Mammary epithelial cell (primary cell): ENCODE measurements at regions of chr2 and their contacts with region 1.

Region 1: GRCh38 chr2:70977605-70978205 is 725 bp upstream of the ANKRD53 start:
- DNase-seq: peak; percentile 83
- H3K4me3 ChIP-seq: peak overlapping the region in 2 of 3 experiments; percentile 47 to 49
- H3K27ac ChIP-seq: peak overlapping the region; percentile 32
- H3K4me1 ChIP-seq: peaks cover 18% of the 10 kb centered on the region
- H3K27me3 ChIP-seq: no peaks in the 10 kb centered on the region
- CTCF ChIP-seq: no peak

Region 2: DNA sequence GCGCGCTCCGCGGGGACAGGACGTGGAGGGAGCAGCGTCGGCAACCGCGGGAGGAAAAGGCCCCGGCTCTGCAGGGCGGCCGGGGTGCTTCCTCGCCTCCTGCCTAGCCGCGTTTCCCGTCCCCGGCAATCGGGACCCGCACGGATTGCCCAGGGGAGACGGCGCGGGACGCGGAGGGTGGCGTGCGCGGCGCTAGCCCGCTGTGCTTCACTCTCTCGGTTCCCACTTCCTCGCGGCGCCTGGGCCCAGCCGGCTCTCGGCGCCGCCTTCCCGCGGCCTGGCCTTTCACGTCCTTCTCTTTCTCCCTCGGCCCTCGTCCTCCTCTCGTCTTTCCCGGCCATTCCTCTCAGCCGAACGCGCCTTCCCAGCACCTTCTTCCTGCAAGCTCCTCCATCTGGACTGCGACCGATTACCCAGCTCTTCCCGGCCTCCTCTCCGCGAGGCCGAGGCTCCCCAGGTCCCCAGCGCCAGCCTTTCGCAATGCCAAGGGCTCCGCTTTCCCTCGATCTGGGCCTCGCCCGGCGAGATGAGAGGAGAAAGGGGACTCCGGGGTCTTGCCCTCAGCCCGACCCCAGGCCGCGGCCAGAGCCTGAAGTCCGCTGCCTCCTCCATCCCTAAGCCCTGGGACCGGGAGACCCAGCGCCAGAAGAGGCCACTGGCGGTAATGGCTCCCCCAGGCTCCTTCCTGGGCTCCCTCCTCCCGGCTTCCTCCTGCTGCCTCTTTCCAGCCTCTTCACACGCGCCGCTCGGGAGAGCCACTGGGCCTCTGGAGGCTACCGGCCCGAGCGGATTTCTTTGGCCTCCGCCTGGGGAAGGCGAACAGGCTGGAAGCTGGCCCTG is 76.3 kb before region 1 on chr2:
- CTCF ChIA-PET with region 1: no interaction called
- dilution Hi-C with region 1: no loop called
- in situ Hi-C with region 1: no loop called
- intact Hi-C with region 1: no loop called
- DNase-seq: no peak
- H3K4me3 ChIP-seq: peak overlapping the region; percentile 3 to 49 (median 44)
- H3K27ac ChIP-seq: no peak overlapping the region
- H3K4me1 ChIP-seq: peaks cover 10% of the 10 kb centered on the region
- H3K27me3 ChIP-seq: peaks cover 41% of the 10 kb centered on the region
- CTCF ChIP-seq: no peak

Region 3: DNA sequence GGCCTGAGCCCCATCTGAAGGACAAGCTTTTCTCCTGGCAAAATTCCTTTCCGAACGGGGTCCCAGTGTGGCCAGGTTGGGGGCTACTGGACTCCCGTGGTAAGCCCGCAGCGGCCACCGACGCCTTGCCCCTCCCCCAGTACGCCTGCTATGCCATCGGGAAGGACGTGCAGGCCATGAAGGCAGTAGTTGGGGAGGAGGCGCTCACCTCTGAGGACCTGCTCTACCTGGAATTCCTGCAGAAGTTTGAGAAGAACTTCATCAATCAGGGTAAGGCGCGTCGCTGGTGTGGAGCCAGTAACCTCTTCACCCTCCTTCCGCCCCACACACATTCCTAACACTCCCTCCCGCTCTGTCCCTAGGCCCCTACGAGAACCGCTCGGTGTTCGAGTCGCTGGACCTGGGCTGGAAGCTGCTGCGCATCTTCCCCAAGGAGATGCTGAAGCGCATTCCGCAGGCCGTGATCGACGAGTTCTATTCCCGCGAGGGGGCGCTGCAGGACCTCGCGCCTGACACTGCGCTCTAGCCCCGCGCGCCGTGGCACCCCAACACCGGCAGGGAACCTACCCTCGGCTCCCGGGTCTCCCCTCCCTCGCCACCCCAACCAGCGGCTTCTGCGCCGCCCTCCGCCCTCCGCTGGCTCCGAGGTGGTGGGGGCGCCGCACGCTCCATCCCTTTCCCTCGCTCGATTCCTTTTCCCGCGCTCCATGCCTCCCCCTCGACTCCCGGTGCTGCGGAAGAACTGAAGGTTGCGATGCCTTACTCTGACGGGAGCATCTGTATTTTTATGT is 12.9 kb before region 1 on chr2:
- CTCF ChIA-PET with region 1: interaction called, 4 read pairs
- dilution Hi-C with region 1: no loop called
- in situ Hi-C with region 1: no loop called
- intact Hi-C with region 1: loop called (anchors 1 kb)
- DNase-seq: peak; percentile 52
- H3K4me3 ChIP-seq: peak overlapping the region; percentile 40 to 47 (median 43)
- H3K27ac ChIP-seq: no peak overlapping the region
- H3K4me1 ChIP-seq: peaks cover 3% of the 10 kb centered on the region
- H3K27me3 ChIP-seq: no peaks in the 10 kb centered on the region
- CTCF ChIP-seq: peak; percentile 52 to 87

Region 4: DNA sequence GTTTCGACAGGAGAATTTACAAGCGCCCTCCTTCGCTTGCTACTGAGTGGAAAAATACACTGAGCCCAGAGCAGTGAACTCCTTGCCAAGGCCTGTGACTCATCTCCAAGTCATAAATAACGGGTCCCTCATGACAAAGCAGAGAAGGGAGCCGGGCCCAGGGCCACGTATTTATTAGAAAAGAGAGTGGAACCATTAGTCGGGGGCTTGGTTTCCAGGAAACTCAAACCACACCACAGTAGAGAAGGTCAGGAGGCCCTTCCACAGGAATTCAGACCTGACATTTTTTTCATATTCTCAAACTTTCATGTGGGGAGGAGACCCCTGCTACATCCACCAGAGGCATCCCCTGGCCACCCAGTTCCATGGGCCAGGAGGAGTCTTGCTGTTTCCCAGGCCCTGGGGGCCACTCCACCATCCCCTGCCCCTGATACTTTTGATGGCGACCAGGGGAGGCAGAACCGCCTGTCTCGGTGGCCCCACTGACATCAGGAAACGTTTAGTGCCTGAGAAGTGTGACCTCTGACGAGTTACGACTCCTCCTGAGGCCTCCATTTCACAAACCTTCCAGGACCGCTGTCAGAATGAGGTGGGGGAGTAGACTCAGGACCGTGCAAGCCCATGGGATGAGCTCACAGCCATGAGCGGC is 765.4 kb after region 1 on chr2:
- CTCF ChIA-PET with region 1: no interaction called
- dilution Hi-C with region 1: no loop called
- in situ Hi-C with region 1: no loop called
- intact Hi-C with region 1: no loop called
- DNase-seq: peak; percentile 80
- H3K4me3 ChIP-seq: no peak overlapping the region
- H3K27ac ChIP-seq: no peak overlapping the region
- H3K4me1 ChIP-seq: peaks cover 28% of the 10 kb centered on the region
- H3K27me3 ChIP-seq: no peaks in the 10 kb centered on the region
- CTCF ChIP-seq: no peak